ENCODE measurements at regions of chr15 and their contacts with region 1.

Region 1: GRCh38 chr15:98856218-98856907 is 151.2 kb downstream of the PGPEP1L start:
- DNase-seq: no peak

Region 2: GRCh38 chr15:99059010-99059981 is 202.9 kb after region 1 on chr15:
- intact Hi-C with region 1: loop called (anchors 5 kb)
- DNase-seq: peak; percentile 31 to 94 (median 52)

Region 3: GRCh38 chr15:99155961-99156450 is 299.6 kb after region 1 on chr15:
- intact Hi-C with region 1: no loop called
- DNase-seq: no peak

Measured in posterior cingulate gyrus (tissue), 11 donors.